ENCODE measurements at regions of chr19 and their contacts with region 1.

Region 1: GRCh38 chr19:50537762-50538230 is 24.1 kb upstream of the ASPDH start:
- DNase-seq: peak; percentile 48
- ATAC-seq: peak; percentile 97
- H3K4me3 ChIP-seq: no peak overlapping the region
- H3K27ac ChIP-seq: no peak overlapping the region
- H3K4me1 ChIP-seq: no peaks in the 10 kb centered on the region
- H3K27me3 ChIP-seq: no peaks in the 10 kb centered on the region
- CTCF ChIP-seq: peak; percentile 94

Region 2: DNA sequence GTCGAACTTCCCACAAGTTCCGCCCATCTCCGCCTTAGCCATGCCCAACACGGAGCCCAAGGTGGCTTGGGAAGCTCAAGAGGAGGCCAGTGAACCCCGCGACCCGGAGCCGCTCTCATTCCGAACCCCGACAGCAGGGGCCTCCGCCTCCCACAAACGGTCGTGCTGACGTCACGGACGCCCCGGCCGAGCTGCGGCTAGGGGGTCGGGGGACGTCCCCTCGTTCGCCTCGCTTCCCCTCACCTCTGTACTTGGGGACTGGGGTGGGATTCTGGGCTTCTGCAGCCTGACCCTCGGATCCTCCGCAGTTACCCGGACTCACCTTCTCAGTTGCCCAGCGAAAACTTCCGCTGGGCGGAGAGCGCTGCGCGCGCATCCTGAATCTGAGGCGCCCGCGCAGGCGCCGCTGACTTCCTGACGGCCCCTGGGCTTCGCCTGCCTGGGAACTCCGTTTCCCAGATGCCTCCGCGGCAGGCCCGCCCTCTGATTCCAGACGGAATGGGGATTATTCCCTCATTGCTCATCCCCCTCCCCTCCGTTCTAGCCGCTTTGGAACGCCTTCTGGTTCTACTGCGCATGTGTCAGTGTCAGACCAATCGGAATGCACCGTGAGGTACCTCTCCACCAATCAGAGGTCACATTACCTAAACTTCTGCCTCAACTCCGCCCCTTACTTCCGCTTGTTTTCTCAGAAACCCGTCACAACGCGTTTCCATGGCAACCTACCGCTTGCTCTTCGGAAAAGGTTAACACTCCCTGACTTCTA is 512.6 kb before region 1 on chr19 and contains the start of gene VRK3:
- CTCF ChIA-PET with region 1: no interaction called
- POLR2A ChIA-PET with region 1: no interaction called
- in situ Hi-C with region 1: no loop called
- intact Hi-C with region 1: no loop called
- DNase-seq: peak; percentile 97
- ATAC-seq: peak; percentile 95
- H3K4me3 ChIP-seq: peak within 1 kb of the TSS; percentile 91 to 92
- H3K27ac ChIP-seq: peak within 1 kb of the TSS; percentile 89
- H3K4me1 ChIP-seq: peaks cover 4% of the 10 kb centered on the region; the same call in 1 of the 2 replicates
- H3K27me3 ChIP-seq: no peaks in the 10 kb centered on the region
- CTCF ChIP-seq: no peak
- total RNA-seq, gene VRK3: 32.6 TPM

Region 3: GRCh38 chr19:50556282-50557008 is 18.6 kb after region 1 on chr19:
- CTCF ChIA-PET with region 1: interaction called, 13 read pairs
- POLR2A ChIA-PET with region 1: no interaction called
- in situ Hi-C with region 1: no loop called
- intact Hi-C with region 1: no loop called
- DNase-seq: peak; percentile 15
- ATAC-seq: peak; percentile 87
- H3K4me3 ChIP-seq: peak overlapping the region; percentile 49 to 62
- H3K27ac ChIP-seq: no peak overlapping the region
- H3K4me1 ChIP-seq: no peaks in the 10 kb centered on the region
- H3K27me3 ChIP-seq: no peaks in the 10 kb centered on the region
- CTCF ChIP-seq: peak; percentile 97

Region 4: GRCh38 chr19:50779504-50780457 is 242.0 kb after region 1 on chr19:
- CTCF ChIA-PET with region 1: interaction called, 3 read pairs
- POLR2A ChIA-PET with region 1: no interaction called
- in situ Hi-C with region 1: no loop called
- intact Hi-C with region 1: loop called (anchors 5 kb)
- DNase-seq: no peak
- ATAC-seq: 0 out of 2 replicates have a peak, but pooled peaks have one; percentile 47
- H3K4me3 ChIP-seq: no peak overlapping the region
- H3K27ac ChIP-seq: no peak overlapping the region
- H3K4me1 ChIP-seq: no peaks in the 10 kb centered on the region
- H3K27me3 ChIP-seq: peaks cover 5% of the 10 kb centered on the region
- CTCF ChIP-seq: no peak

Region 5: GRCh38 chr19:51415187-51415586 is 877.4 kb after region 1 on chr19:
- CTCF ChIA-PET with region 1: interaction called, 10 read pairs
- POLR2A ChIA-PET with region 1: no interaction called
- in situ Hi-C with region 1: no loop called
- intact Hi-C with region 1: no loop called
- DNase-seq: no peak
- ATAC-seq: no peak
- H3K4me3 ChIP-seq: no peak overlapping the region
- H3K27ac ChIP-seq: no peak overlapping the region
- H3K4me1 ChIP-seq: no peaks in the 10 kb centered on the region
- H3K27me3 ChIP-seq: no peaks in the 10 kb centered on the region
- CTCF ChIP-seq: no peak